Ascending aorta (tissue), 2 donors: ENCODE measurements at regions of chr9 and their contacts with region 1.

Region 1: GRCh38 chr9:120868676-120869359 is 8.2 kb downstream of the PHF19 start:
- DNase-seq: peak; percentile 88 to 98
- H3K4me3 ChIP-seq: peak overlapping the region; percentile 54 to 62
- H3K27ac ChIP-seq: peak overlapping the region; percentile 83 to 85
- H3K4me1 ChIP-seq: peaks cover 5 to 16% of the 10 kb centered on the region in 2 donors
- H3K27me3 ChIP-seq: no peaks in the 10 kb centered on the region
- CTCF ChIP-seq: peak; percentile 49 to 71 (median 61)

Region 2: DNA sequence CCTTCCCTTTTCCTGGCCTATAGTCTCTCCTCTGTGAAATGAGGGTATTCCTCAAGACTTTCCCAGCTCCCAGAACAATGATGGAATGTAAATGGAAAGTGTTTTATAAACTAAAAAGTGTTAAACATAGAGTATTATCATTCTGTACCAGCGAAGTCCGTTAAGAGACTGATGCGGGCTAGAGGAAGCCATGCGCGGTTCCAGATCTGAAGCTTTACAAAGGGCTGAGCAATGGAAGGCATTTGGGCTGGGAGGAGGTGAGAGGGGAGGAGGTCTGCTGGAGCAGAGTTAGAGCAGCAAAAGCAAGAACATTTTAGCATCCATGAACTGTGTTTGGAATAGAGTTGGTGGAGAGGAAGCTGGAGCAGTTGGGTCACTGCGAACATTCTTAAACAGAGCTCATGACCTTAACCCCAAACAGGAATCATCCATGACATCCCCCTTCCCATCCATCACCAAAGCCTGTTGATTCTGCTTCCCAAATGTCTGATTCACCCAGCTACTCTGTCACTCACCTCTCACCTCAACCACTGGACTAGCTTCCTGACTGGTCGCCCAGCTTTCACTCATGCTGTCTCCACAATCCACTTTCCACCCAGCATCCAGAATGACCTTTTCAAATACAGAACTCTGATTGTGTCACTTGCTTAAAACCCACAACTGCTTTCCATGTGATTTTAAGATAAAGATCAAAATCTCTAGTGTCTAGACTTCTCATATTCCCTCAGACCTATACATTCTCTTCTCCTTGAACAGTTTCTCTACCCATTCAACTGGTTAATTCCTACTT is 325.9 kb before region 1 on chr9:
- intact Hi-C with region 1: no loop called
- DNase-seq: no peak
- H3K4me3 ChIP-seq: no peak overlapping the region
- H3K27ac ChIP-seq: no peak overlapping the region
- H3K4me1 ChIP-seq: no peaks in the 10 kb centered on the region
- H3K27me3 ChIP-seq: no peaks in the 10 kb centered on the region
- CTCF ChIP-seq: no peak

Region 3: DNA sequence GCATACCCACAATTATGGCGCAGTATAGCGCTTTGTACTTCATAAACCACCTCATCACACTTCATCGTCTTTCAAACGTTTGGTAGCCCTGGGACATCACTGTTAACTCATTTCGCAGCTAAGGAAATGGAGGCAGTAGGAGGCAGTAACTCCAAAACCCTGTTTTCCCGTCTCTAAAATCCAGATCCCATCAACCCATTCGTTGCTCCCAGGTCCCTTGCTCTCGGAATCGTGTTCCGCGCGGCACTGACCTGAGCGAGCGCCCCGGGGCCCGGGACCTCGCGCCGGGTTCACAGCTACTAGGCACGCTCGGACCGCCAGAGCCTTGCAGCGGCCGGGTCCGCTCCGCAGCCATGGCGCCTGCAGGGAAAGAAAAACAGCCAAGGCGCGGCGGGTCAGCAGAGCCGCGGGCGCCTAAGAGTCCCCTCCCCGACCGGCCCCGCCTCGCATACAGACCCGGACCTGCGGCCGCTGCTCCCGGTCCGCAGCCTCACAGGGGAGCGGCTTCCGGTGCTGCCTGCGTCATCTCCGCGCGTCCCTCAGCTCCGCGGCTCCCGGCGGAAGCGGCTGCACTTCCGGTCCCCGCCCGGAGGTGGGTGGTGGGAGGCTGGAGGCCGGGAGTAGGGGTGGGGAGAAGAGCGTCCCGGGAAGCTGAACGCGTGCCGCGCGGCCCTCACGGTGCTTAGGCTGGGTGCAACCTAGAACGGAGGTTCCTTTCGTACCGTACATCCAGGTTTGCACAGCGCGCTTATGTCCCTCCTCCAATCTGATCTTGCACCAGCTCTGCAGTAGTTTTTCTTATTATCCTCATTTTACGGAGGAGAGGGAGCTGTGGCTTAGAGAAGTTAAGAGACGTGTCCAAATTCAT is 75.7 kb before region 1 on chr9 and contains the start of gene FBXW2:
- intact Hi-C with region 1: loop called (anchors 5 kb)
- DNase-seq: peak; percentile 56 to 95
- H3K4me3 ChIP-seq: peak within 1 kb of the TSS; percentile 98 to 99
- H3K27ac ChIP-seq: peak within 1 kb of the TSS; percentile 88 to 95
- H3K4me1 ChIP-seq: peaks cover 7 to 31% of the 10 kb centered on the region in 2 donors
- H3K27me3 ChIP-seq: no peaks in the 10 kb centered on the region
- CTCF ChIP-seq: peak in 1 of 3 experiments; percentile 4
- total RNA-seq, gene FBXW2: 35.5 TPM

Region 4: DNA sequence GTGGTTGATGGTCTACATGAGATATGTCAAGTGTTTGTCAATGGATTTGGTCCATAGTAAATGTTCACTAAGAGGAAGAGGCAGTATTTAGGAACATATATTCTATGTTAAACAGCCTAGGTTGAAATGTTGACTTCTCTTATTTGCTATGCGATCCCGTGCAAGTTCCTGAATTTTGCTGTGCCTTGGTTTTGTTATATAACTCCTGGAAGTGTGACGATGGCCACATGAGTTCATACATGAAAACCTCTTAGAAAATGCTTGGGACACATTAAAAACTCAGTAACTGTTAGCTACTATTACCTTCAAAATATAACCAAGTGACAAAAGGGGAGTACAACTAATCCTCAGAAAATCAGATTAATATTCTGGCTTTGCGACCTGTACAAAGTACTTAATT is 53.7 kb before region 1 on chr9:
- intact Hi-C with region 1: no loop called
- DNase-seq: no peak
- H3K4me3 ChIP-seq: no peak overlapping the region
- H3K27ac ChIP-seq: no peak overlapping the region
- H3K4me1 ChIP-seq: no peaks in the 10 kb centered on the region
- H3K27me3 ChIP-seq: no peaks in the 10 kb centered on the region
- CTCF ChIP-seq: no peak

Region 5: DNA sequence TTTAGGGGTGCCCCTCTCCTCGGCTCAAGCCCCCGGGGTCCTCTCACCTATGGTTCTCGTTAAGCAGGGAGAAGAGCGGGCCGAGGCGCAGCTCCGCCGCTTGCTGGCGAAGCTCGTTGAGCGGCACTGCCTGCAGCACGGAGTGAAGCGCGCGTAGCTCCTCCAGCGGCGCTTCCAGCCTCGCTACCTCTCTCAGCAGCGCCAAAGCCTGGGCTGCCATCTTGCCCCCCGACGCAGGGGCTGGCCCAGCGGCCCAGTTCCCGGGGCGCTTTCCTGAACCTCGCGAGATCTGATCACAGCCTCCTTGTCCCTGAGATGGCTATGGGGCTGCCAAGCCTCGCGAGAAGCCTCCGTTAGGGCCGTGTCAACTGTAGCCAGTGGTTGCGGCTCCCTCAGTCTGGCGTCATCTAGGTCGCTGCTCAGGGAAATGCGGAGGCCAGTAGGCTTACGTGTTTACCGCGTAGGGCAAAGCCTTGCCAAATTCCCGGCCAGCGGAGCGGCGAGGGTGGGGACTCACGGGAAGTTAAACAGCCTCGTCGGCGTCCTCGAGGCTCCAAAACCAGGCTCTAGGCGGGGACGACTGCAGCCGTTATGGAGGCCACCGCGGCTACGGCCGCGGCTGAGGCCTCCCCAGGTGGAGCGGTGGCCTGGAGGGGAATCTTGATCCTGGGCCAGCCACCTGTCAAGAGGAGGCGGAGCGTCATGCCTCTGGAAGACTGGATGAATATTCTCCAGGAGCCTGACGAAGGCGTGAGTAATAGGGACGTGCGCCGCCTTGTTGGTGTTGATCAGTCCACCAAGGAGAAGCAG is 25.9 kb before region 1 on chr9 and contains the start of gene PSMD5:
- intact Hi-C with region 1: loop called (anchors 1 kb)
- DNase-seq: peak; percentile 99 to 100
- H3K4me3 ChIP-seq: peak within 1 kb of the TSS; percentile 75 to 84
- H3K27ac ChIP-seq: peak within 1 kb of the TSS; percentile 89 to 97
- H3K4me1 ChIP-seq: peaks cover 2 to 25% of the 10 kb centered on the region in 2 donors
- H3K27me3 ChIP-seq: no peaks in the 10 kb centered on the region
- CTCF ChIP-seq: no peak
- total RNA-seq, gene PSMD5: 18.2 TPM

Region 6: DNA sequence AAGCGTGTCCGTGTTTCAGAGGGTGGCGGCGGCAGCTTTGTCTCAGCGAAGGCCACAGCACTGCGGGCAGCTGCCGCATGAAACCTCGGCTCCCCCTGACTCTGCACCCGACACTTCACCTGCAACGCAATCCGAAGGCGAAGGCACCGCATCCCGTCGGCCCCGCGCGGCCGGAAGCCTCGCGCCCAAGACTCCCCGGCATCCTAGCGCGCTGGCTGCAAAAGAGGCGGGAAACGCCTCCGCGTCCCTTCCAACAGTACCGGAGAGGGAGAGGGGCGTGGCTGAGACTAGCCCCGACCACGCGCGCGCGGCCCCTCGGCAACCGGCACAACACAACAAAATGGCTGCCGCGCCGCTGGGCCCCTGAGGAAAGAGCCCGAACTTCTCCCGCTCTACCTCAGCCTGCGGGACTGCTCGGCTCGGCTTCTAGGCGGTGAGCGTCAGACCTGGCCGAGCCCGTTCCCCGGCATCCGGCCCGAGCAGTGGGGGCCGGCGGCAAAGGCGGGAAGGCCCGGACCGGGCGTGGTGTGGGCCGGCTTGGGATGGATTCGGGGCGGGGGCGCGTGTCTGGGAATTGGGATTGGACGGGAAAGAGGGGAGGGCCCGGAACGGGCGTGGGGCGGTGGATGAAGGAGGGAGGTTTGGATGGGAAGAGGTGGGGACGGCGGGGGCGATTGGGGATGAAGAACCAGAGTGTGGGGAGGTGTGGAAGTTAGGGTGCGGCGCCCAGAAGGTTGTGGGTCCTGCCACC is 206.0 kb after region 1 on chr9 and contains the start of gene CNTRL:
- intact Hi-C with region 1: loop called (anchors 2 kb)
- DNase-seq: peak; percentile 81 to 96
- H3K4me3 ChIP-seq: peak within 1 kb of the TSS; percentile 77
- H3K27ac ChIP-seq: peak within 1 kb of the TSS; percentile 94 to 98
- H3K4me1 ChIP-seq: peaks cover 0 to 18% of the 10 kb centered on the region in 2 donors
- H3K27me3 ChIP-seq: no peaks in the 10 kb centered on the region
- CTCF ChIP-seq: no peak
- total RNA-seq, gene CNTRL: 8.5 TPM

Region 7: DNA sequence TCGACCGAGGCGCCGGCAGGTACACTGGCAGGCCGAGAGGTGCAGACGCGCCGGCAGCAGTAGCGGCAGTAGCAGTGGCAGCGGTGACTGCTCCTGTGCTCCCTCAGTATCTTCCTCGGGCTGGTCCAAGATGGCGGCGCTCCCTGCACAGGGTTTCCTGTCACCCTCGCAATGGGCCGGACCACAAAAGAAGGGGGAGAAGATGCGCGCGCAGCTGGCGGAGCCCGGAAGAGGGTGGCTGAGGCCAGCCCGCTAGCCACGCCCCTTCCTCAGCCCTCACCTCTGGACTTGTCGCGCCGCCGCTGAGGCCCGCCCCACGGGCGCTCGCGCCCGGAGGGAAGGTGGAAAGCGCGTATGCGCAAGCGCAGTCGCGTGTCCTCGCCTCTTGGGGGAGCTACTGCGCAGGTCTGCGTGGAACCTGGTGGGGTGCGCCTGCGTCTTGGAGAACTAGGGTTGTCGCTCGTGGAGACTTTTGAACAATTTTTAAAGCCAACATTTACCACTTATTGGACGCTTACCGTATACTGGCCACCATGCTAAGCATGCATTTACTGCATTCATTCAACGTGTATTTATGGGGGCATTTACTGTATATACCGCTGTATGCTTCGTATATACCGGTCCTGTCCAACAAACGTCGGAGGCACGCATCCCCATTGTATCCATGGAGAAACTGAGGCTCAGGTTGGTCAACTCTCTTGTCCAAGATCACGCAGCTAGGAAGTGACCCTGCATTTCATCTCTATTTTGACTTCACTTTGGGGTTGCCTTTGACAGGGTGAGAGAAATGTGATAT is 333.1 kb after region 1 on chr9 and contains the start of gene RAB14:
- intact Hi-C with region 1: loop called (anchors 5 kb)
- DNase-seq: peak; percentile 98 to 100
- H3K4me3 ChIP-seq: peak within 1 kb of the TSS; percentile 75 to 87
- H3K27ac ChIP-seq: peak within 1 kb of the TSS; percentile 90 to 96
- H3K4me1 ChIP-seq: peaks cover 0 to 20% of the 10 kb centered on the region in 2 donors
- H3K27me3 ChIP-seq: no peaks in the 10 kb centered on the region
- CTCF ChIP-seq: peak; percentile 44 to 54 (median 53)
- total RNA-seq, gene RAB14: 18.2 TPM